ENCODE measurements at regions of chr17 and their contacts with region 1.

Region 1: DNA sequence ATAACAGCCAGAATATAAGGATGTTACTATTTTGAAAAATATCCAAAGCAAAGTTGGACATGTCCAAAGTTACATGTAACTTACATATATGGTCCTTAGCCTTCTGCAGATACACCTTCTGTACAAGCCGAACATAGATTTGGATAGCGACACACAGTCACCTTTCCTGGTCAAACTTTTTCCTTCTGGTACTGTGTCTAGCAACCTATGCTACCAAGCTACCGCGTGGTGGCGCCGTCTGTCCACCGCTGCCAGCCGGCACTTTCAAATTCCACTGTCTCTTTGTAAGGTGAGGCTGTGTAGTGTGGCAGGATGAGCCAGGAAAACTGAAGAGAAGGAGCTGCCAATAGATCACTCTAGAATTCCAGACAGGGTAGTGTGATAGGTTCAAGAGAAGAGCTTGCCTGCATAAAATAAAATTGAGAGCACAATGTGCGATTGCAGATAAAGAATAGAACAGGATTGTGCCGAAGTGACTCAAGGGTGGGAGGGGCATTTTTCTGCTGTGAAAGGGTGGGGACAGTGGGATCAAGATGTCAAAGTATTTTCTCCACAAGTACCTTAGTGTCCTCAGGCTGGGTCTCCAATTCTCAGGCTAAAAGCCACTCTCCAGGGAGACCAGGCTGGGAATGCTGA is 366.9 kb downstream of the SLC39A11 start:
- DNase-seq: no peak
- ATAC-seq: peak; percentile 59
- H3K4me3 ChIP-seq: no peak overlapping the region
- H3K27ac ChIP-seq: no peak overlapping the region
- H3K4me1 ChIP-seq: peaks cover 18% of the 10 kb centered on the region
- H3K27me3 ChIP-seq: no peaks in the 10 kb centered on the region
- CTCF ChIP-seq: peak; percentile 62 to 87 (median 75)
- EP300 ChIP-seq: no peak
- POLR2A ChIP-seq: no peak
- RAD21 ChIP-seq: peak; percentile 84

Region 2: GRCh38 chr17:72122765-72123529 is 602.6 kb before region 1 on chr17:
- CTCF ChIA-PET with region 1: no interaction called
- POLR2A ChIA-PET with region 1: no interaction called
- RAD21 ChIA-PET with region 1: no interaction called
- SMC1A ChIA-PET with region 1: no interaction called
- in situ Hi-C with region 1: no loop called
- intact Hi-C with region 1: no loop called
- DNase-seq: no peak
- ATAC-seq: peak; percentile 36
- H3K4me3 ChIP-seq: peak overlapping the region; percentile 84
- H3K27ac ChIP-seq: no peak overlapping the region
- H3K4me1 ChIP-seq: peaks cover 5% of the 10 kb centered on the region
- H3K27me3 ChIP-seq: peaks cover 3 to 10% of the 10 kb centered on the region in 2 experiments; a peak in 2 of 4 replicates
- CTCF ChIP-seq: no peak
- EP300 ChIP-seq: no peak
- POLR2A ChIP-seq: peak; percentile 32; the same call in 1 of the 2 replicates
- RAD21 ChIP-seq: no peak

Region 3: DNA sequence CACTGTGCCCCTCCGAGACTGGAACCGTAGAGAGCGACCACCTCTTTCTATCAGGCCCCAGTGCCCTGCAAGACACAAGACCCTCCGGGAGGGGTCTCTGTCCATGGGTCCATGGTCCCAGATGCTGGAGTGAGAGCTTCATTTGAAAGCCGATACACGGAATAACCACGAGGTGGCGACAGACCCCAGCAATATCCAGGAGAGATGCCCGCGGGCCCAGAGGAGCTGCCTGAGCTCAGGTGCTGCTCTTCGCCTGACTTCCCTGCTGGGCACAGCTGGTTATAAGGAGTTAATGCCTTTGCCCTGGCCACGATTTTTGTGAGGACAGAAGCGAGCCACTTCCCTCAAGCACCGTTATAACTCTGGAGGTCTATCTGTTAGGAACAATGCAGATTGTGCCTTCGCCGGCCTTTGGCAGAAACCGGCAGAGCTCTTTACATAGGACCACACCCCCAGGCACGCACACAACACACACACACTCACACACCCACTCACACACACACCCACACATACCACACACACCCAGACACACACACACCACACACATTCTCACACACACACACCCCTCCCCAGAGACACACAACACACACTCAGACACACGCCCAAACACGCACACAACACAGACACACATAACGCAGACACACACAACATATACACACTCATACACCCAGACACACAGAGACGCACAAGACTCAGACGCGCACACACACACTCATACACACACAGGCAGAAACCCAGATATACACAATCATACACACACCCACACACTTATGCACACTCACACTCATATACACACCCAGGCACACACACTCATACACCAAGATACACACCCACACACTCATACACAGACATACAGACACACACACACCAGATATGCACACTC is 168.4 kb before region 1 on chr17:
- CTCF ChIA-PET with region 1: interaction called, 527 read pairs
- POLR2A ChIA-PET with region 1: interaction called, 5 read pairs
- RAD21 ChIA-PET with region 1: interaction called, 271 read pairs
- SMC1A ChIA-PET with region 1: interaction called, 349 read pairs
- in situ Hi-C with region 1: loop called (anchors 5 kb)
- intact Hi-C with region 1: loop called (anchors 1 kb)
- DNase-seq: no peak
- ATAC-seq: peak; percentile 78
- H3K4me3 ChIP-seq: no peak overlapping the region
- H3K27ac ChIP-seq: no peak overlapping the region
- H3K4me1 ChIP-seq: no peaks in the 10 kb centered on the region
- H3K27me3 ChIP-seq: no peaks in the 10 kb centered on the region
- CTCF ChIP-seq: peak; percentile 82 to 85 (median 83)
- EP300 ChIP-seq: no peak
- POLR2A ChIP-seq: no peak
- RAD21 ChIP-seq: peak; percentile 79

Region 4: GRCh38 chr17:72618001-72618509 is 107.5 kb before region 1 on chr17:
- CTCF ChIA-PET with region 1: interaction called, 14 read pairs
- POLR2A ChIA-PET with region 1: interaction called, 3 read pairs
- RAD21 ChIA-PET with region 1: interaction called, 16 read pairs
- SMC1A ChIA-PET with region 1: interaction called, 8 read pairs
- in situ Hi-C with region 1: no loop called
- intact Hi-C with region 1: no loop called
- DNase-seq: no peak
- ATAC-seq: peak; percentile 48
- H3K4me3 ChIP-seq: no peak overlapping the region
- H3K27ac ChIP-seq: no peak overlapping the region
- H3K4me1 ChIP-seq: no peaks in the 10 kb centered on the region
- H3K27me3 ChIP-seq: no peaks in the 10 kb centered on the region
- CTCF ChIP-seq: no peak
- EP300 ChIP-seq: no peak
- POLR2A ChIP-seq: no peak
- RAD21 ChIP-seq: no peak

Region 5: GRCh38 chr17:72850410-72851118 is 125.0 kb after region 1 on chr17:
- CTCF ChIA-PET with region 1: no interaction called
- POLR2A ChIA-PET with region 1: no interaction called
- RAD21 ChIA-PET with region 1: no interaction called
- SMC1A ChIA-PET with region 1: no interaction called
- in situ Hi-C with region 1: no loop called
- intact Hi-C with region 1: no loop called
- DNase-seq: no peak
- ATAC-seq: no peak
- H3K4me3 ChIP-seq: no peak overlapping the region
- H3K27ac ChIP-seq: no peak overlapping the region
- H3K4me1 ChIP-seq: no peaks in the 10 kb centered on the region
- H3K27me3 ChIP-seq: no peaks in the 10 kb centered on the region
- CTCF ChIP-seq: no peak
- EP300 ChIP-seq: no peak
- POLR2A ChIP-seq: no peak
- RAD21 ChIP-seq: no peak

Region 6: DNA sequence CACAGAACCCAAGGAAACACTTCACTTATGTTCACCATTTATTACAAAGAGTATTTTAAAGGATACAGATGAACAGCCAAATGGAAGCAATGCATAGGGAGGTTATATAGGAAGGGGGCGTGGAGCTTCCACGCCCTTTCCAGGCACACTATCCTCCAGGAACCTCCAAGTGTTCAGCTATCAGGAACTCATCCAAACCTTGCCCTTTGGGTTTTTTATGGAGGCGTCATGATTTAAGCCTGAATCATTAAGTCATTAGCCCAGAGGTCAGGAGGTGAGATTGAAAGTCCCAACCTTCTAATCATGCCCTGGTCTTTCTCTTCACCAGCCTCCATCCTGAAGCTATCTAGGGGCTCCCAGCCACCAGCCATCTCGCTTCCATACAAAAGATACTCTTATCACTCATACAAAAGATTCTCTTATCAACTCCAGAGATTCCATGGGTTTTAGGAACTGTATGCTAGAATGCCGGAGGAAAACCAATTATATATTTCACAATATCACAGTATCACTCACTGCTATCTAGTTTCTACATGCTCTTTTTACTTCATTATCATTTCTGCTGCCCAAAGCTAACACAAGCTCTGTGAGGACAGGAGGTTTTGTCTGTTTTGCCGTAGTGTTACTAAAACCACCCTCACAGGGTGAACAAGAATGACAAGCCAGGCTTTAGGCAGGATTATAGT is 153.6 kb after region 1 on chr17:
- CTCF ChIA-PET with region 1: no interaction called
- POLR2A ChIA-PET with region 1: no interaction called
- RAD21 ChIA-PET with region 1: no interaction called
- SMC1A ChIA-PET with region 1: no interaction called
- in situ Hi-C with region 1: no loop called
- intact Hi-C with region 1: no loop called
- DNase-seq: no peak
- ATAC-seq: no peak
- H3K4me3 ChIP-seq: no peak overlapping the region
- H3K27ac ChIP-seq: no peak overlapping the region
- H3K4me1 ChIP-seq: no peaks in the 10 kb centered on the region
- H3K27me3 ChIP-seq: no peaks in the 10 kb centered on the region
- CTCF ChIP-seq: no peak
- EP300 ChIP-seq: no peak
- POLR2A ChIP-seq: no peak
- RAD21 ChIP-seq: no peak

Region 7: DNA sequence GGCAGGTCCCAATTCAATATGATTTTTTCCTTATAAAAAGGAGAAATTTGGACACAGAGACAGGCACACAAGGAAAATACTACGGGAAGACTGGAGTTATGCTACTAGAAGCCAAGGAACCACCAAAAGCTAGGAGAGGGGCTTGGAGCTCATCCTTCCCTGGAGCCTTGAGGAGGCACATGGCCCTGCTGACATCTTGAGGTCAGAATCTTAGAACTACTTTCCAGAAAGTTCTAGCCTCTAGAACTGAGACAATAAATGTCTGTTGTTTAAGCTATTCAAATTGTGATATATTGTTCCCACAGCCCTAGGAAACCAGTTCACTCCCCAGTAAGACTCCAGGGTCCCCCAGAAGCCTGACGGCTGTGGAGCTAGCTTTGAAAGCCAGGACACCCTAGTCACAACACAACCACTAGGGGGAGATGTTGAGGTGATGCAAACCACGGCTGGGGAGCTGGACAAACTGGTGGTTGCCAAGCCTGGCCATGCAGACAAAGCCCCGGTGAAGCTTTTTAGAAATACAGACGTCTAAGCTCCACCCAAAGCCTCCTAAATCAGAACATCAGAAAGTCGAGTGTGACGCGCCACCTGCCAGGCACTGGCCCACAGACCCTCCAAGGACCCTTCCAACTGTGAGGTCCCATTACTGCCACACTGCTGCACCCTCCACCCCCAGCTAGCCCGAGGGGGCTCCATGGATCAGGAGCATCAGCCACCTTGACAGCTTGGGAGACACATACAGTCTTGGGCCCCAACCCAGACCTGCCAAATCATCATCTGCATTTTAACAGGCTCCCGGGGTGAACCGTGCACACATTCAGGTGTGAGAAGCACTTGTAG is 260.6 kb after region 1 on chr17:
- CTCF ChIA-PET with region 1: interaction called, 122 read pairs
- POLR2A ChIA-PET with region 1: interaction called, 3 read pairs
- RAD21 ChIA-PET with region 1: interaction called, 66 read pairs
- SMC1A ChIA-PET with region 1: interaction called, 65 read pairs
- in situ Hi-C with region 1: no loop called
- intact Hi-C with region 1: loop called (anchors 2 kb)
- DNase-seq: peak; percentile 47
- ATAC-seq: peak; percentile 99
- H3K4me3 ChIP-seq: no peak overlapping the region
- H3K27ac ChIP-seq: no peak overlapping the region; the same call in 1 of the 2 replicates
- H3K4me1 ChIP-seq: peaks cover 10% of the 10 kb centered on the region
- H3K27me3 ChIP-seq: no peaks in the 10 kb centered on the region
- CTCF ChIP-seq: peak; percentile 84 to 88 (median 88)
- EP300 ChIP-seq: no peak
- POLR2A ChIP-seq: no peak
- RAD21 ChIP-seq: peak; percentile 81

Region 8: GRCh38 chr17:73182616-73183310 is 457.2 kb after region 1 on chr17:
- CTCF ChIA-PET with region 1: interaction called, 219 read pairs
- POLR2A ChIA-PET with region 1: no interaction called
- RAD21 ChIA-PET with region 1: interaction called, 137 read pairs
- SMC1A ChIA-PET with region 1: interaction called, 134 read pairs
- in situ Hi-C with region 1: loop called (anchors 5 kb)
- intact Hi-C with region 1: no loop called
- DNase-seq: no peak
- ATAC-seq: no peak
- H3K4me3 ChIP-seq: no peak overlapping the region
- H3K27ac ChIP-seq: no peak overlapping the region
- H3K4me1 ChIP-seq: no peaks in the 10 kb centered on the region
- H3K27me3 ChIP-seq: no peaks in the 10 kb centered on the region
- CTCF ChIP-seq: no peak
- EP300 ChIP-seq: no peak
- POLR2A ChIP-seq: no peak
- RAD21 ChIP-seq: no peak

Region 9: GRCh38 chr17:73237714-73238113 is 512.2 kb after region 1 on chr17:
- CTCF ChIA-PET with region 1: interaction called, 26 read pairs
- POLR2A ChIA-PET with region 1: interaction called, 10 read pairs
- RAD21 ChIA-PET with region 1: interaction called, 10 read pairs
- SMC1A ChIA-PET with region 1: interaction called, 11 read pairs
- in situ Hi-C with region 1: no loop called
- intact Hi-C with region 1: loop called (anchors 1 kb)
- DNase-seq: no peak
- ATAC-seq: no peak
- H3K4me3 ChIP-seq: no peak overlapping the region; the same call in 1 of the 2 replicates
- H3K27ac ChIP-seq: 0 out of 2 replicates have a peak overlapping the region, but pooled peaks have one; percentile 18
- H3K4me1 ChIP-seq: peaks cover 5% of the 10 kb centered on the region; the same call in 1 of the 2 replicates
- H3K27me3 ChIP-seq: no peaks in the 10 kb centered on the region
- CTCF ChIP-seq: no peak
- EP300 ChIP-seq: no peak
- POLR2A ChIP-seq: no peak
- RAD21 ChIP-seq: no peak

Region 10: DNA sequence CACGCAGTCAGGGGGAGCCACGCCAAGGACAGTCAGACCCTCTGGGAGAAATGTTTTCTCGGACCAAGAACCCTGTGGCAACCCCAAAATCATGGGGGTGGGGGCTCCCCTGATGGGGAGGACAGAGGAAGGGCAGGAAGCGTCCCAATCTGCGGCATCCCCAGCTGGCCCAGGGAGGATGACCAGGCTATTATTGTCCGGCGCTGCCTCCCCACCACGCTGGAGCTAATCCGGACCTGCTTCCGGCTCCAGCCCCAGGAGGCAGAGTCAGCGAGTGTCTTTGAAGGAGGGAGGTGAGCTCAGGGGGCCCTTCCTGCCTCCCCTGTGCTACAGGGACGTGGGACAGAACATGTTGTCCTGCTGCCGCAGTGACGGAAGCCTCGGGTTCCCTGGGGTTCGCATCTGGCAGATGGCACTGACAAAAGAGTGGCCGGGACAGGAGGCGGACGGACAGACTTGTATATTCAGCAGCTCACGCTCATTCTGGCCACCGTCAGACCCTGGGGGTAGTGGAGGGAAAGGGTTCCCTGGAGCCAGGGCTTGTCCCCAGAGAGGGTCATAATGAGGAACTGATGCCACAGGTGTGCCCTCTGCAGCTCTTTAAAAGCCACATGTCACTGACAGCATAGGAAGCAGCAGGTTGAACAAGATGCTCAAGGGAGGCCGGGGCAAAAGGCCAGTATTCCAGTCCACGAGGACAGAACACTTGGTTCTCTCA is 640.5 kb after region 1 on chr17:
- CTCF ChIA-PET with region 1: interaction called, 88 read pairs
- POLR2A ChIA-PET with region 1: no interaction called
- RAD21 ChIA-PET with region 1: interaction called, 75 read pairs
- SMC1A ChIA-PET with region 1: interaction called, 56 read pairs
- in situ Hi-C with region 1: loop called (anchors 5 kb)
- intact Hi-C with region 1: loop called (anchors 5 kb)
- DNase-seq: no peak
- ATAC-seq: peak; percentile 52
- H3K4me3 ChIP-seq: no peak overlapping the region
- H3K27ac ChIP-seq: no peak overlapping the region
- H3K4me1 ChIP-seq: no peaks in the 10 kb centered on the region
- H3K27me3 ChIP-seq: peaks cover 0 to 2% of the 10 kb centered on the region in 2 experiments; a peak in 2 of 4 replicates
- CTCF ChIP-seq: no peak; a peak in 1 of 6 replicates
- EP300 ChIP-seq: no peak
- POLR2A ChIP-seq: no peak
- RAD21 ChIP-seq: no peak

Measured in GM12878 (cell line).